Activated T-helper 2 cell treated with anti-CD3 and anti-CD28 coated beads, Interferon-gamma antibody, Interleukin-2, Interleukin-4, amounts not matched to agents 10 μg/mL and 5 μg/mL and 100 μg/mL, durations not matched to agents 14 hours and 24 hours and 36 hours (primary cell): ENCODE measurements at regions of chr10 and their contacts with region 1.

Region 1: GRCh38 chr10:119892188-119893065 is at the start of gene SEC23IP:
- DNase-seq: peak; percentile 92
- H3K4me3 Mint-ChIP-seq: peak within 1 kb of the TSS; percentile 99
- H3K27ac Mint-ChIP-seq: peak within 1 kb of the TSS; percentile 92
- H3K4me1 Mint-ChIP-seq: peaks cover 38% of the 10 kb centered on the region
- H3K27me3 Mint-ChIP-seq: peaks cover 6% of the 10 kb centered on the region
- total RNA-seq, gene SEC23IP: 85.9 and 87.4 TPM in 2 replicates

Region 2: GRCh38 chr10:119872860-119873681 is 19.4 kb before region 1 on chr10:
- intact Hi-C with region 1: loop called (anchors 1 kb)
- DNase-seq: peak; percentile 84
- H3K4me3 Mint-ChIP-seq: peak overlapping the region; percentile 84
- H3K27ac Mint-ChIP-seq: peak overlapping the region; percentile 77
- H3K4me1 Mint-ChIP-seq: peaks cover 30% of the 10 kb centered on the region
- H3K27me3 Mint-ChIP-seq: no peaks in the 10 kb centered on the region